ENCODE measurements at regions of chr6 and their contacts with region 1.

Region 1: GRCh38 chr6:155660251-155660977 is 204.8 kb upstream of the NOX3 start:
- DNase-seq: no peak
- ATAC-seq: no peak
- H3K4me3 ChIP-seq: no peak overlapping the region
- H3K4me3 Mint-ChIP-seq: no peak overlapping the region
- H3K27ac ChIP-seq: no peak overlapping the region
- H3K27ac Mint-ChIP-seq: no peak overlapping the region
- H3K4me1 ChIP-seq: no peaks in the 10 kb centered on the region
- H3K4me1 Mint-ChIP-seq: no peaks in the 10 kb centered on the region
- H3K27me3 ChIP-seq: no peaks in the 10 kb centered on the region
- H3K27me3 Mint-ChIP-seq: peaks cover 4% of the 10 kb centered on the region
- CTCF ChIP-seq: no peak

Region 2: GRCh38 chr6:154515826-154516225 is 1144.6 kb before region 1 on chr6:
- CTCF ChIA-PET with region 1: no interaction called
- POLR2A ChIA-PET with region 1: no interaction called
- intact Hi-C with region 1: loop called in 1 of 2 experiments (anchors 5 kb)
- DNase-seq: no peak
- ATAC-seq: no peak
- H3K4me3 ChIP-seq: no peak overlapping the region
- H3K4me3 Mint-ChIP-seq: no peak overlapping the region
- H3K27ac ChIP-seq: no peak overlapping the region
- H3K27ac Mint-ChIP-seq: no peak overlapping the region
- H3K4me1 ChIP-seq: no peaks in the 10 kb centered on the region
- H3K4me1 Mint-ChIP-seq: peaks cover 3% of the 10 kb centered on the region
- H3K27me3 ChIP-seq: no peaks in the 10 kb centered on the region
- H3K27me3 Mint-ChIP-seq: peaks cover 20% of the 10 kb centered on the region
- CTCF ChIP-seq: no peak

Measured in CD8-positive, alpha-beta T cell (primary cell).